ENCODE measurements at regions of chr6 and their contacts with region 1.

Region 1: DNA sequence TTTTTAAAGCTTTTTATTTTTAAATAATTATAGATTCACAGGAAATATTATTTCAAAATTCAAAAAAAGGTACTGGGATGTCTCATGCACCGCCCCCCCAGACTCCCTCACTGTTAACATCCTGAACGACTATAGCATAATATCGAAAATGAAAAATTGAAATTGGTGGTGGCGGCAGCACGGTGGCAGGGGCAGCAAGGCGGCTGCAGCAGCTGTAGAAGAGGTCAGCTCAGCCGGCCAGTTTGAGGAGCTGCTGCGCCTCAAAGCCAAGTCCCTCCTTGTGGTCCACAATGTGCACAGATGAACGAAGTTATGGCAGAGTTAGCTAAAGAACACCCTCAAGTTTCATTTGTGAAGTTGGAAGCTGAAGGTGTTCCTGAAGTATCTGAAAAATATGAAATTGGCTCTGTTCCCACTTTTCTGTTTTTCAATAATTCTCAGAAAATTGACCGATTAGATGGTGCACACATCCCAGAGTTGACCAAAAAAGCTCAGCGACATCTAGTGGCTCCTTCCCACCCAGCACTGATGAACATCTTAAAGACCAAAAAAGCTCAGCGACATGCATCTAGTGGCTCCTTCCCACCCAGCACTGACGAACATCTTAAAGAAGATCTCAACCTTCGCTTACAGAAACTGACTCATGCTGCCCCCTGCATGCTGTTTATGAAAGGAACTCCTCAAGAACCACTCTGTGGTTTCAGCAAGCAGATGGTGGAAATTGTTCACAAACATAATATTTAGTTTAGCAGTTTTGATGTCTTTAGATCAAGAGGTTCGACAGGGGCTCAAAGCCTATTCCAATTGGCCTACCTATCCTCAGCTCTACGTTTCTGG is 100.8 kb downstream of the FAM217A start:
- DNase-seq: peak; percentile 78
- ATAC-seq: peak; percentile 99
- H3K4me3 Mint-ChIP-seq: peak overlapping the region; percentile 5
- H3K27ac Mint-ChIP-seq: peak overlapping the region; percentile 24
- H3K4me1 Mint-ChIP-seq: peaks cover 11% of the 10 kb centered on the region
- H3K27me3 Mint-ChIP-seq: peaks cover 2% of the 10 kb centered on the region
- CTCF ChIP-seq: peak; percentile 72

Region 2: GRCh38 chr6:3748208-3749066 is 229.7 kb before region 1 on chr6:
- CTCF ChIA-PET with region 1: interaction called, 61 read pairs
- POLR2A ChIA-PET with region 1: no interaction called
- intact Hi-C with region 1: loop called (anchors 5 kb)
- DNase-seq: peak; percentile 56
- ATAC-seq: peak; percentile 63
- H3K4me3 Mint-ChIP-seq: no peak overlapping the region
- H3K27ac Mint-ChIP-seq: no peak overlapping the region
- H3K4me1 Mint-ChIP-seq: no peaks in the 10 kb centered on the region
- H3K27me3 Mint-ChIP-seq: peaks cover 25% of the 10 kb centered on the region
- CTCF ChIP-seq: peak; percentile 42

Region 3: GRCh38 chr6:3929281-3929798 is 48.8 kb before region 1 on chr6:
- CTCF ChIA-PET with region 1: interaction called, 20 read pairs
- POLR2A ChIA-PET with region 1: no interaction called
- intact Hi-C with region 1: no loop called
- DNase-seq: no peak
- ATAC-seq: no peak
- H3K4me3 Mint-ChIP-seq: no peak overlapping the region
- H3K27ac Mint-ChIP-seq: no peak overlapping the region
- H3K4me1 Mint-ChIP-seq: no peaks in the 10 kb centered on the region
- H3K27me3 Mint-ChIP-seq: peaks cover 4% of the 10 kb centered on the region
- CTCF ChIP-seq: no peak

Region 4: DNA sequence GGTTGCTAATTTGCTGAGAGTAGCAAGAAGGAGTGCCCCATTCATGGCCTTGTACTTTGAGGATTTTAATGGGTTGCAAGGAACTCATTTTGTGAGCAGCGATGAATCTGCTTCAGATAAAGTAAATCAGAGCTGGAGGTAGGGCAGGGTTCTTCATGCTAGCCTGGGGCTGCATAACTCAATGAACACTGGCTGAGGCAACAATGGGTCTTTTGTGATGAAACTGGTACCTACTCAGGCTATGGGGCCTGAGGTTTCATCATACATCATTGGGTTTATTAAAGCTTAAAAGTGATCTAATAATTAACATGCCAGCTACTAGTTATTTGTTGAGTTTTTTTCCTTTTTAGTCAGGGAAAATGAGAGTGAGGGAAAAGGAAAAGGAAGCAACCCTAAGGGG is 22.0 kb before region 1 on chr6:
- CTCF ChIA-PET with region 1: interaction called, 12 read pairs
- POLR2A ChIA-PET with region 1: no interaction called
- intact Hi-C with region 1: no loop called
- DNase-seq: no peak
- ATAC-seq: no peak
- H3K4me3 Mint-ChIP-seq: no peak overlapping the region
- H3K27ac Mint-ChIP-seq: no peak overlapping the region
- H3K4me1 Mint-ChIP-seq: no peaks in the 10 kb centered on the region
- H3K27me3 Mint-ChIP-seq: peaks cover 3% of the 10 kb centered on the region
- CTCF ChIP-seq: no peak

Region 5: GRCh38 chr6:3990692-3991501 is 12.8 kb after region 1 on chr6:
- CTCF ChIA-PET with region 1: interaction called, 53 read pairs
- POLR2A ChIA-PET with region 1: no interaction called
- intact Hi-C with region 1: no loop called
- DNase-seq: peak; percentile 86
- ATAC-seq: peak; percentile 98
- H3K4me3 Mint-ChIP-seq: no peak overlapping the region
- H3K27ac Mint-ChIP-seq: no peak overlapping the region
- H3K4me1 Mint-ChIP-seq: peaks cover 8% of the 10 kb centered on the region
- H3K27me3 Mint-ChIP-seq: no peaks in the 10 kb centered on the region
- CTCF ChIP-seq: peak; percentile 75

Region 6: GRCh38 chr6:4008324-4009047 is 30.4 kb after region 1 on chr6:
- CTCF ChIA-PET with region 1: interaction called, 11 read pairs
- POLR2A ChIA-PET with region 1: no interaction called
- intact Hi-C with region 1: no loop called
- DNase-seq: no peak
- ATAC-seq: peak; percentile 53
- H3K4me3 Mint-ChIP-seq: no peak overlapping the region
- H3K27ac Mint-ChIP-seq: no peak overlapping the region
- H3K4me1 Mint-ChIP-seq: peaks cover 49% of the 10 kb centered on the region
- H3K27me3 Mint-ChIP-seq: no peaks in the 10 kb centered on the region
- CTCF ChIP-seq: peak; percentile 29